ENCODE measurements at regions of chr7 and their contacts with region 1.

Region 1: DNA sequence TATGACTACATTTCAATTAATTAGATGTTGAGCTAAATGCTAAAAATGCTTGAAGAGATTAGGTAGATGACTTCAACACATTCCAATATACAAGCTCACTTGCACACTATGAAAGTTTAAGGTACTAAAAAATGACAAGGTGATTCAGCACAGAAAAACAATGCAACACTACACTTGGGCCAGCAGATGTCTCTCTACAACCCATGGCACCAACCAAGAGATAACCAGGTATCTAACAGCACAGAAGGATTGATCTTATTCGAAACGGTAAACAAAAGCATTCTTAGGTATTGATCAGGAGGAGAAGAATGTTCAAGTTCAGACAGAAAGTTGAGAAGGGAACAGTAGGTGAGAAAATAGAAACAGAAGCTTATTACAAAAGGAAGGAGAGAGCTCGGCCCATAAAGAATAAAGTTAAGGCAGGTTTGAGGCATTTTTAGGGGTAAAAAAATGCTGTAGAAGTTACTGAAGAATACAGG is 248.2 kb upstream of the KLF14 start:
- DNase-seq: peak; percentile 54
- H3K4me3 Mint-ChIP-seq: no peak overlapping the region
- H3K27ac Mint-ChIP-seq: no peak overlapping the region
- H3K4me1 Mint-ChIP-seq: peaks cover 55% of the 10 kb centered on the region
- H3K27me3 Mint-ChIP-seq: no peaks in the 10 kb centered on the region

Region 2: DNA sequence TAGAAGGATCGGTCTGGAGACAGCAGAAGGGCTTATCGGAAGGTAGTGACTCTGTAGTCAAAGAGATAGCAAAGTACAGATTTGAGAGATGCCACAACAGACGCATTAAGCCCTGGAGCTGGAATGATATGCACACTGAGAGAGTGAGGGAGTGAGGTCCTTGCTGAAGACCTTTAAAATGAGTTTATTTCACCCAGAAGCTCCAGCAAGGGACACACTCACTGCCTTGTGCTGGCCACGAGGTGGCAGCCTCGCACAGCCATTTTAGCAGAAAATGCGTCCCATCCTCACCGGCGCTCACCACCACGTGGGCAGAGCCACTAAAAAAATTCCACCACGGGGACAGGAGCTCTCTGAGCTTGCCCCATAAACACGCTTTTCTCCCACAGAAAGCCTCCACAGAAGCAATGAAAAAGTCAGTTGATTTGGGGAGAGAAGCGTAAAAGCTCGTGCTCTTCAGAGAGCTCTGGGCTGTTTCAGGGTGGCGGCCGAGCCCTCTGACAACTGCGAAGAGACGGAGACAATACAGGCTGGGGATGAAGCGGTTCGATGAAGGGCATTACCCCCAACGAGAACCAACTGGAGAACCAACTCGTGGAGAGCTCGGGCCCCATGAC is 85.2 kb before region 1 on chr7:
- CTCF ChIA-PET with region 1: interaction called, 13 read pairs
- intact Hi-C with region 1: no loop called
- DNase-seq: peak; percentile 85
- H3K4me3 Mint-ChIP-seq: no peak overlapping the region
- H3K27ac Mint-ChIP-seq: peak overlapping the region; percentile 85
- H3K4me1 Mint-ChIP-seq: peaks cover 88% of the 10 kb centered on the region
- H3K27me3 Mint-ChIP-seq: no peaks in the 10 kb centered on the region

Region 3: GRCh38 chr7:130996841-130997231 is 14.6 kb after region 1 on chr7:
- CTCF ChIA-PET with region 1: interaction called, 61 read pairs
- intact Hi-C with region 1: loop called (anchors 2 kb)
- DNase-seq: peak; percentile 58
- H3K4me3 Mint-ChIP-seq: peak overlapping the region; percentile 59
- H3K27ac Mint-ChIP-seq: peak overlapping the region; percentile 90
- H3K4me1 Mint-ChIP-seq: peaks cover 79% of the 10 kb centered on the region
- H3K27me3 Mint-ChIP-seq: no peaks in the 10 kb centered on the region

Region 4: GRCh38 chr7:131027287-131027773 is 45.1 kb after region 1 on chr7:
- CTCF ChIA-PET with region 1: interaction called, 15 read pairs
- intact Hi-C with region 1: loop called (anchors 2 kb)
- DNase-seq: peak; percentile 52
- H3K4me3 Mint-ChIP-seq: no peak overlapping the region
- H3K27ac Mint-ChIP-seq: peak overlapping the region; percentile 74
- H3K4me1 Mint-ChIP-seq: peaks cover 86% of the 10 kb centered on the region
- H3K27me3 Mint-ChIP-seq: no peaks in the 10 kb centered on the region

Region 5: DNA sequence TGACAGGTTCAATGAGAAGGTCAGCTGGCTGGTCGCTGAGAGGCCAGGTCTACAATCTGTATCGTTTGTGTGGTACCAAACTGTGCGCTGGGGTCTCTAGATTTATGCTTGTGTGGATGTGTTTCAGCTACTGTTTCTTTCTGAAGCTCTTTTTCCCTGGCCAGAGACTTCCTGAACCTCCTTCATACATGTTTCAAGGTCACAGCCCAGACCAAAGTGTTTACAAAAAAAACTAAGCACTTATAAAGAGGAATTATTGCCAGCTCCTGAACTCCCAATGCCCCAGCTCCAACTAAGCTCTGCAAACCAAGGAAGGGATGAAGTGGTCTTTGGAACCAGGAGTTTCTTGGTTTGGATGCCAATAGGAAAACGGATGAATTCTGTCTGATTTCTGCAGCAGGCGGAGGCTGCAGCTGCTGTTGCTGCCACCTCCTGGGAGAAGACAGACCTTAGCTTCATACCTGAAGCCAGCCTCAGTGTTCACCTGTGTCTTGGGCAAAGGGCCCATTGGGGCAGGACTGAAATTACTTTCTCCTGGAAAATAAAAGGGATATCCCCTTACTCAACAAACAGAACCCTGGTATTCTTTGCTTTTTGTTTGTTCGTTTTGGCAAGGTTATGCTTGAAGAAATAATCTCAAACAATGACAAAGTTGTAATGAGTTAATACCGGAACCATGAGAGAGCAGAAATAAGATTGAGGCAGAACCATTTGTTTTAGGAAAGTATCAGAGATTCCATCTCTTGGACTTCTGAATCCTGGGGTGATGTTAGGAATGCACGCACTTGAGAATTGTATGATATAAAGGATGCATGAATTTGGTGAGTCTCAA is 320.9 kb after region 1 on chr7:
- CTCF ChIA-PET with region 1: no interaction called
- intact Hi-C with region 1: loop called (anchors 1 kb)
- DNase-seq: peak; percentile 53
- H3K4me3 Mint-ChIP-seq: no peak overlapping the region
- H3K27ac Mint-ChIP-seq: no peak overlapping the region
- H3K4me1 Mint-ChIP-seq: peaks cover 5% of the 10 kb centered on the region
- H3K27me3 Mint-ChIP-seq: no peaks in the 10 kb centered on the region

Measured in activated naive CD4-positive, alpha-beta T cell treated with anti-CD3 and anti-CD28 coated beads for 36 hours (primary cell).